Kidney (tissue), 22 donors: ENCODE measurements at regions of chr18 and their contacts with region 1.

Region 1: DNA sequence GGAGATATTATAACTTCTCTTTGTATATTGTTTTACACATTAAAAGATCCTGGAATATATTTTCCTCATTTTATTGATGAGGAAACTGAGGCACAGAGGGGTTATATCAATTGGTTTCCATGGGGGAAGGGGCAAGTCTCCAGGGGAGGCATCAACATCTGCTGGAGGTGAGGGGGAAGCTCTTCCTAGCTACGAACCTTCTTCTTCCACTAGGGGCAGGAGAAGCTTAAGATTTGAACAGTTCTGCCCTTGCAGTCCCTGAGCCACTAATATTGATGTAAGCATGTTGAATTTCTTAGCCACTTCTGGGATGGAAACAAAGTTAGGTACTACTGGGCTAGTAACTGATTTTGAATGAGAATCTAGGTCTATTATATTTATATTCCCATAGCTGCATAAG is 140.1 kb upstream of the AQP4 start:
- DNase-seq: peak in 2 of 5 donors; percentile 26 to 28
- H3K4me3 ChIP-seq: no peak overlapping the region
- H3K27ac ChIP-seq: no peak overlapping the region
- H3K4me1 ChIP-seq: peaks cover 0 to 2% (median 0%) of the 10 kb centered on the region in 3 donors
- H3K27me3 ChIP-seq: no peaks in the 10 kb centered on the region
- CTCF ChIP-seq: peak; percentile 16

Region 2: GRCh38 chr18:26804519-26804918 is 201.1 kb before region 1 on chr18:
- intact Hi-C with region 1: loop called (anchors 10 kb)
- DNase-seq: peak in 3 of 5 donors; percentile 32 to 61 (median 55)
- H3K4me3 ChIP-seq: no peak overlapping the region
- H3K27ac ChIP-seq: no peak overlapping the region
- H3K4me1 ChIP-seq: no peaks in the 10 kb centered on the region
- H3K27me3 ChIP-seq: no peaks in the 10 kb centered on the region
- CTCF ChIP-seq: peak; percentile 29

Region 3: GRCh38 chr18:27064673-27065072 is 59.1 kb after region 1 on chr18:
- intact Hi-C with region 1: no loop called
- DNase-seq: no peak
- H3K4me3 ChIP-seq: no peak overlapping the region
- H3K27ac ChIP-seq: no peak overlapping the region
- H3K4me1 ChIP-seq: no peaks in the 10 kb centered on the region
- H3K27me3 ChIP-seq: no peaks in the 10 kb centered on the region
- CTCF ChIP-seq: no peak